ENCODE measurements at regions of chr5 and their contacts with region 1.

Region 1: GRCh38 chr5:167511276-167511675 is 780.2 kb upstream of the WWC1 start:
- DNase-seq: no peak
- ATAC-seq: peak; percentile 99
- H3K4me3 Mint-ChIP-seq: no peak overlapping the region
- H3K27ac Mint-ChIP-seq: peak overlapping the region; percentile 90
- H3K4me1 Mint-ChIP-seq: peaks cover 43% of the 10 kb centered on the region
- H3K27me3 Mint-ChIP-seq: no peaks in the 10 kb centered on the region
- CTCF ChIP-seq: no peak

Region 2: DNA sequence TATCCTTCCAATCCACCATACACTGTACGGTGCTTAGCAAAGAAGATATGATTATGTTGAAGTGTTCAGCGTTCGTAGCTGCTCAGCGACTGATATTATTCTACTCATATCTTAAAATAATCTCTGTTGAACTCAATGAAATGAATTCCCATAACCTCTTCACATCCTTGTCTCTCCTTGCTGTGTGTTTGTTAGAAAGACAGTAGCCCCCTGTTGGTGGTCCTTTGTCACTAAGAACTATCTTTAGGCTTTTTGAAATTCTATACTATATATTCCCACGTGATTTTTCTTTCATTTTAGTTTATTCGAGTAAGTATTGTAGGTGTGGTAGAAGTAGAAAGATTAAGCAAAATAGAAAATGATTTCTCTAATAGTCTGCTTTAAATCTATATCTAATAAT is 17.4 kb after region 1 on chr5:
- CTCF ChIA-PET with region 1: interaction called, 10 read pairs
- POLR2A ChIA-PET with region 1: no interaction called
- DNase-seq: no peak
- ATAC-seq: peak; percentile 34; the same call in 1 of the 2 replicates
- H3K4me3 Mint-ChIP-seq: no peak overlapping the region
- H3K27ac Mint-ChIP-seq: no peak overlapping the region
- H3K4me1 Mint-ChIP-seq: peaks cover 19% of the 10 kb centered on the region
- H3K27me3 Mint-ChIP-seq: no peaks in the 10 kb centered on the region; the same call in 1 of the 2 replicates
- CTCF ChIP-seq: no peak

Measured in WTC11 (cell line).